Naive thymus-derived CD4-positive, alpha-beta T cell (primary cell): ENCODE measurements at regions of chr10 and their contacts with region 1.

Region 1: GRCh38 chr10:75235375-75236177 is at the start of gene COMTD1:
- DNase-seq: peak; percentile 82 to 96 (median 91)
- ATAC-seq: peak; percentile 82
- H3K4me3 ChIP-seq: peak within 1 kb of the TSS; percentile 80
- H3K4me3 Mint-ChIP-seq: peak within 1 kb of the TSS; percentile 74 to 88 (median 82)
- H3K27ac ChIP-seq: peak within 1 kb of the TSS; percentile 78
- H3K27ac Mint-ChIP-seq: peak within 1 kb of the TSS; percentile 73 to 97 (median 86)
- H3K4me1 ChIP-seq: peaks cover 4 to 11% of the 10 kb centered on the region in 2 donors
- H3K4me1 Mint-ChIP-seq: peaks cover 10 to 23% (median 16%) of the 10 kb centered on the region in 7 donors
- H3K27me3 ChIP-seq: no peaks in the 10 kb centered on the region
- H3K27me3 Mint-ChIP-seq: no peaks in the 10 kb centered on the region
- total RNA-seq, gene COMTD1: 10.1 to 29.2 (median 15.8) TPM

Region 2: DNA sequence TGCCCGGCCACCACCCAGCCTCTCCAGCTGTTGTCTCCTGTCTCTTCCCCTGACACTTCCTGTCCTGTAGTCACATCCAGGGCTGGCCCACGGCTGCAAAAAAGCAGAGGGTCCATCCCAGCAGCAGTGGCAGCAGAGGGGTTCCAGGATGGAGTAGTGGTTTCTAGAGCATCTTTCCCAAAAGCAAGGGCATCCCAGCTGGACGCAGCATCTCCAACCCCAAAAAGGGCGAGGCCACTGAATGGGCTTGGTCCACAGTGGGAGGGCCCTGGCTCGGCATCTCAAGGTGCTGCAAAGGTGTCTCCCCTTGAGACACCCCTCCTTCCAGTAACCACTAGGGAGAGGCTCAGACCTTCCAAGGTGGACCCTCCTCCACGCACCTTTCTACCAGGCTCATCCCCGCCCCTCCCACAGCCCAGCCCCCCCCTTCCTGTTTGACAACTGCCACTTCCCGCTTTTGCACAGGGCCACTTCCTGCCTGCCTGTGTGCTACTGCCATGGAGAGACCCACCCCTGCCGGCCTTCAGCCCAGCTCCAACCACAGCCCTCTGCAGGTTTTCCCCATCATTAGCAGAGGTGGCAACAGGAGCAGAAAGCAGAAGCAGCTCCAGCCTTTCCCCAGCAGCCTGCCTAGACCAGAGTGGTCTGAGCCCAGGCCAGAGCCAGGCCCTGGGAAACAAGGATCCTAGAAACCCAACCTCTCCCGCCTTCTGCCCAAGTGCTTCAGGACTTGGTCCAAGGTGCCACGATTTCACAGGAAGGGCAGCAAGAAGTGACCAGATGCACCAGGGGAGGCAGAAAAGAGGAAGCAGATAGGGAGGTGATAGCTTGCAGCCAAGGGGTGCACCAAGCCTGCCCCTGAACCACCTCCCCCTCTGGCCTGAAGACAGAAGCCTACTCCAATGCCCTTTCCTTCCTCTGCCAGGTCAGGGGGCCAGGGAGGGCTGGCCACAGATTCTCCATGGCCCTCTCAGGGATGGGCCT is 1369.8 kb before region 1 on chr10:
- CTCF ChIA-PET with region 1: no interaction called
- POLR2A ChIA-PET with region 1: no interaction called
- intact Hi-C with region 1: loop called (anchors 5 to 10 kb)
- DNase-seq: peak; percentile 18 to 50 (median 47)
- ATAC-seq: peak; percentile 90
- H3K4me3 ChIP-seq: peak overlapping the region; percentile 60
- H3K4me3 Mint-ChIP-seq: peak overlapping the region; percentile 79 to 92 (median 87)
- H3K27ac ChIP-seq: peak overlapping the region; percentile 67
- H3K27ac Mint-ChIP-seq: peak overlapping the region; percentile 88 to 97 (median 96)
- H3K4me1 ChIP-seq: peaks cover 28 to 72% of the 10 kb centered on the region in 2 donors
- H3K4me1 Mint-ChIP-seq: peaks cover 56 to 92% (median 88%) of the 10 kb centered on the region in 7 donors
- H3K27me3 ChIP-seq: no peaks in the 10 kb centered on the region
- H3K27me3 Mint-ChIP-seq: no peaks in the 10 kb centered on the region

Region 3: DNA sequence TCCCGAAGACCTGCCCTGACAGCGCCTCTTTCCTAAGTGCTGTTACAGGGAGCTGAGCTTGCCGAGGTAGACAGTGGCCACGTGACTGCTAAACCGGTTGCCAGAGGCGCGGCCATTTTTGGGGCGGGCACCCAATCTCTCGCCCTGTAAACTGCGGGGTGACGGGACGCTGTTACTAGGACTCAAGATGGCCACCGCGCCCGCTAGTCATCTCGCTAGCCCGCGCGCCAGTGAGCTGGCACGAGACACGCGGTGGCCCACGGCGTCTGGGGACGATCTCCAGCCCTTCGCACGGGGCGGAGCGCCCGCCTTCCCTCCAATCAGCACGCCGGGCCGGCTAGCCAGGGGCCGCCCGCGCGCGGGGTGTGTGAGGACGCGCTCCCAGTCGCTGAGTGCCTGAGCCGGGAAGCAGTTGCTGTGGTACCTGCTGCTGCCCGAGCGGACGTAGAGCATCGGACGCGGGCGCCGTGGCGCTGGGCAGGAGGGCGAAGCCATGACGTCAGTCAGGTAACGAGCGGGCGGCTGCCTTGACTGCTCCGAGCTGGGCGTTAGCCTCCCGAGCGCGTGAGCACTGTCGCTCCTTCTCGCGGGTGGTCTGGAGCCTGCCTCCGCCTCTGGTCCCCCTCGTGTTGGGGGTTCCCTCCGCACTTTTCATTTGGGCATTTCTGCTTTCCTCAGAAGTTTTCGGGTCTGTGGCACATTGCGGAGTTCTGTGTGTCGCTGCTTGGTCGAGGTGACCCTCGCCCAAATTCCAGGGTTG is 1059.0 kb before region 1 on chr10:
- CTCF ChIA-PET with region 1: no interaction called
- POLR2A ChIA-PET with region 1: no interaction called
- intact Hi-C with region 1: loop called in 1 of 2 experiments (anchors 2 kb)
- DNase-seq: peak; percentile 90 to 96 (median 95)
- ATAC-seq: peak; percentile 98
- H3K4me3 ChIP-seq: peak overlapping the region; percentile 84
- H3K4me3 Mint-ChIP-seq: peak overlapping the region; percentile 87 to 98 (median 93)
- H3K27ac ChIP-seq: peak overlapping the region; percentile 86
- H3K27ac Mint-ChIP-seq: peak overlapping the region; percentile 94 to 98 (median 97)
- H3K4me1 ChIP-seq: peaks cover 6 to 7% of the 10 kb centered on the region in 2 donors
- H3K4me1 Mint-ChIP-seq: peaks cover 14 to 46% (median 40%) of the 10 kb centered on the region in 7 donors
- H3K27me3 ChIP-seq: no peaks in the 10 kb centered on the region
- H3K27me3 Mint-ChIP-seq: no peaks in the 10 kb centered on the region

Region 4: GRCh38 chr10:74589226-74589673 is 646.3 kb before region 1 on chr10:
- CTCF ChIA-PET with region 1: no interaction called
- POLR2A ChIA-PET with region 1: no interaction called
- intact Hi-C with region 1: loop called (anchors 2 to 10 kb)
- DNase-seq: peak; percentile 41 to 97 (median 92)
- ATAC-seq: peak; percentile 88
- H3K4me3 ChIP-seq: no peak overlapping the region
- H3K4me3 Mint-ChIP-seq: peak overlapping the region in 8 of 10 donors; percentile 6 to 75 (median 60)
- H3K27ac ChIP-seq: peak overlapping the region; percentile 69
- H3K27ac Mint-ChIP-seq: peak overlapping the region; percentile 70 to 97 (median 93)
- H3K4me1 ChIP-seq: peaks cover 37 to 42% of the 10 kb centered on the region in 2 donors
- H3K4me1 Mint-ChIP-seq: peaks cover 21 to 66% (median 59%) of the 10 kb centered on the region in 7 donors
- H3K27me3 ChIP-seq: no peaks in the 10 kb centered on the region
- H3K27me3 Mint-ChIP-seq: no peaks in the 10 kb centered on the region

Region 5: DNA sequence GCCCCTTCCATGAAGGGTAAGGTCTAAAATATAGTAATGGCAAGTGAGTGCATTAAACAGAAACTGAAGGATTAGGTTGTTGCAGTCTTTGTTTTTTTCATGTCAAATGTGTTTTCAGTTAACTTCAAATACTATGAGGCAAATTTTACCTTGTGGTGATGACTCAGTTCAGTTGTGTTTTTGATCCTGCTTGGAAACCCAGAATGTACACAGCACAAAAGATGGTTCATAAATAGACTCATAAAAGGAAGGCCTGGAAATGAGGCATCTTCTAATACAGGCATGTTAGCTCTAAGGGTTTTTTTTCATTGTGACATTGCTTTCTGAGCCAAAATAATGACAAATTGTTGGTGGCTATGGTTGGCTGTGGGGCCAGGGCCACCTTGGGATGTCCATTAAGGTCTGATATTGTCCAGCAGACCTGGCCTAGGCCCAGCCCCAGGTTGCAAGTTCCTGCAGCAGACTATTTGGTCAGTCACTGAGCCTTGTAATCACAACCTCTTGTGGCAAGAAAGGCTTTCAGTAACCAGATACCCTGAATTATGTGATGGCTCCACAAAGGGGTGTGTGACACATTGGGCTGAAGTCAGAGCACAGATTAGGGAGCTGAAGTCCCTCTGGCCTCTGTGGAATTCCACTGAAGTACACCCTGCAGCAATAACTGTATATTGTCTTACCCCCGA is 193.1 kb before region 1 on chr10:
- CTCF ChIA-PET with region 1: no interaction called
- POLR2A ChIA-PET with region 1: interaction called, 3 read pairs
- intact Hi-C with region 1: loop called in 1 of 2 experiments (anchors 2 kb)
- DNase-seq: no peak
- ATAC-seq: no peak
- H3K4me3 ChIP-seq: no peak overlapping the region
- H3K4me3 Mint-ChIP-seq: no peak overlapping the region
- H3K27ac ChIP-seq: no peak overlapping the region
- H3K27ac Mint-ChIP-seq: peak overlapping the region in 1 of 9 donors; percentile 69
- H3K4me1 ChIP-seq: no peaks in the 10 kb centered on the region
- H3K4me1 Mint-ChIP-seq: peaks cover 3 to 38% (median 7%) of the 10 kb centered on the region in 7 donors
- H3K27me3 ChIP-seq: no peaks in the 10 kb centered on the region
- H3K27me3 Mint-ChIP-seq: peaks cover 0 to 18% (median 8%) of the 10 kb centered on the region in 5 donors

Region 6: GRCh38 chr10:75210282-75211006 is 25.1 kb before region 1 on chr10 and contains the start of gene VDAC2:
- CTCF ChIA-PET with region 1: interaction called, 44 read pairs
- POLR2A ChIA-PET with region 1: interaction called, 122 read pairs
- intact Hi-C with region 1: loop called (anchors 1 kb)
- DNase-seq: peak; percentile 92 to 100 (median 98)
- ATAC-seq: peak; percentile 92
- H3K4me3 ChIP-seq: peak within 1 kb of the TSS; percentile 81
- H3K4me3 Mint-ChIP-seq: peak within 1 kb of the TSS; percentile 87 to 100 (median 98)
- H3K27ac ChIP-seq: peak within 1 kb of the TSS; percentile 96
- H3K27ac Mint-ChIP-seq: peak within 1 kb of the TSS; percentile 99 to 100 (median 100)
- H3K4me1 ChIP-seq: peaks cover 15 to 21% of the 10 kb centered on the region in 2 donors
- H3K4me1 Mint-ChIP-seq: peaks cover 21 to 44% (median 29%) of the 10 kb centered on the region in 7 donors
- H3K27me3 ChIP-seq: no peaks in the 10 kb centered on the region
- H3K27me3 Mint-ChIP-seq: no peaks in the 10 kb centered on the region
- total RNA-seq, gene VDAC2: 82.8 to 138 (median 121) TPM

Region 7: GRCh38 chr10:75287697-75288096 is 52.1 kb after region 1 on chr10:
- CTCF ChIA-PET with region 1: no interaction called
- POLR2A ChIA-PET with region 1: no interaction called
- intact Hi-C with region 1: no loop called
- DNase-seq: no peak
- ATAC-seq: no peak
- H3K4me3 ChIP-seq: no peak overlapping the region
- H3K4me3 Mint-ChIP-seq: no peak overlapping the region
- H3K27ac ChIP-seq: no peak overlapping the region
- H3K27ac Mint-ChIP-seq: no peak overlapping the region
- H3K4me1 ChIP-seq: no peaks in the 10 kb centered on the region
- H3K4me1 Mint-ChIP-seq: peaks cover 0 to 1% (median 0%) of the 10 kb centered on the region in 7 donors
- H3K27me3 ChIP-seq: peaks cover 0 to 3% of the 10 kb centered on the region in 2 donors
- H3K27me3 Mint-ChIP-seq: peaks cover 24 to 44% (median 33%) of the 10 kb centered on the region in 5 donors

Region 8: DNA sequence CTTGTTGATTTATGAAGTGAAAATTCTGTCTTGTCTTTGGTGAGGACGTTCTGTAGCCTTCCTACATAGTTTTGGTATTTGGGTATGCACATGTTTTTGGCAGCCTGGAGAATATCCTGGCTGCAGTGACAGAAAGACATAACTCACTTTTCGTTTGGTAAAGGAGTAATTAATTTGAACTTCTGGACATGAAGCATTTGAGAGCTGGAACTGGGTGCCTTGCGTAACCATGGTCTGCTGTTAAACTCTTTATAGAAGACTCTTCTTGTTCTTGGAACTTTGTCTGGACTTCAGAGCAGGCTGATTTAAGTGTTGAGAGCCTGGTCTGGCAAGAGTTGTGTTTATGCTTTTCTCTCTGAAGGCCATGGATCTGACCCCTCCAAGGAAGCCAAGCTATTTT is 427.1 kb after region 1 on chr10:
- CTCF ChIA-PET with region 1: no interaction called
- POLR2A ChIA-PET with region 1: no interaction called
- intact Hi-C with region 1: no loop called
- DNase-seq: no peak
- ATAC-seq: no peak
- H3K4me3 ChIP-seq: no peak overlapping the region
- H3K4me3 Mint-ChIP-seq: no peak overlapping the region
- H3K27ac ChIP-seq: no peak overlapping the region
- H3K27ac Mint-ChIP-seq: no peak overlapping the region
- H3K4me1 ChIP-seq: no peaks in the 10 kb centered on the region
- H3K4me1 Mint-ChIP-seq: no peaks in the 10 kb centered on the region
- H3K27me3 ChIP-seq: no peaks in the 10 kb centered on the region
- H3K27me3 Mint-ChIP-seq: peaks cover 4 to 31% (median 8%) of the 10 kb centered on the region in 5 donors